Naive thymus-derived CD4-positive, alpha-beta T cell (primary cell): ENCODE measurements at regions of chr17 and their contacts with region 1.

Region 1: GRCh38 chr17:8997994-8998628 is 23.2 kb upstream of the NTN1 start:
- DNase-seq: peak; percentile 65 to 86 (median 76)
- ATAC-seq: peak; percentile 88
- H3K4me3 ChIP-seq: no peak overlapping the region
- H3K4me3 Mint-ChIP-seq: no peak overlapping the region
- H3K27ac ChIP-seq: no peak overlapping the region
- H3K27ac Mint-ChIP-seq: peak overlapping the region in 1 of 9 donors; percentile 52
- H3K4me1 ChIP-seq: peaks cover 0 to 6% of the 10 kb centered on the region in 2 donors
- H3K4me1 Mint-ChIP-seq: peaks cover 0 to 15% (median 8%) of the 10 kb centered on the region in 7 donors
- H3K27me3 ChIP-seq: peaks cover 0 to 5% of the 10 kb centered on the region in 2 donors
- H3K27me3 Mint-ChIP-seq: peaks cover 23 to 43% (median 30%) of the 10 kb centered on the region in 5 donors

Region 2: DNA sequence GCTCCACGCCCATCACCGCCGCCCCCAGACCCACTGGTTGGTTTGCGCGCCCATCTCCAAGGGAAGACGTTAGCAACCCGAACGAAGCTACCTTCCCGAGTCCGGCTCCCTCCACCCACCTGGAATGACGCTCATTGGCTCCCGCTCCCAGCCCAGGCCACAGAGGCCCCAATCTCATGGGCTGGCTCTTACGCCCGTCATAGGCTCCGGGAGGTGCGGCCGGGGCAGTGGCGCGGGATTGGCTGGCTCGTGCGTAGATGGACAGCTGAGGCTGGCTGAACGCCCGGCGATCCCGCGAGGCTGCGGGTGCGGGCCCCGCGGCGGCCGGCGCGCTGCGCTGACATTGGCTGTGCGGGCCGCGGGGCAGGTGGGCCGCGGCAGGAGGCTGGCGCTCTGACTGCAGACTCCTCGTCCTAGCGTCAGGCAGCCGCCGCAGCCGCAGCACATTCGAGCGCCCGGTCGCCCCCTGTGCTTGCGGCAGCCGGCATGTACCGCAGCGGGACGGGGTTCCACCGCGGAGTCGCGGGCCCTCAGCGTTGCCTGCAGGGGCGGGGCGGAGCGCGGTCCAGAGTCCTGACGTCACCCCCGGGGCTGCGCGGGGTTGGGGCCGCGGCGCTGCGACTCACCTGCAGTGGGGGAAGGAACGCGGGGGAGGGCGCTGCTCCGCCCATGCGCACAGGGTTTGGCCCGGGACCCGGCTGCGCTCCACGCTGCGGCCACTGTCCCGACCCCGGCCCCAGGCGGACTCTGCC is 367.1 kb before region 1 on chr17:
- CTCF ChIA-PET with region 1: no interaction called
- POLR2A ChIA-PET with region 1: no interaction called
- intact Hi-C with region 1: loop called in 1 of 2 experiments (anchors 10 kb)
- DNase-seq: peak; percentile 63 to 91 (median 82)
- ATAC-seq: peak; percentile 97
- H3K4me3 ChIP-seq: peak overlapping the region; percentile 64
- H3K4me3 Mint-ChIP-seq: peak overlapping the region; percentile 91 to 100 (median 99)
- H3K27ac ChIP-seq: peak overlapping the region; percentile 66
- H3K27ac Mint-ChIP-seq: peak overlapping the region in 7 of 9 donors; percentile 35 to 95 (median 80)
- H3K4me1 ChIP-seq: peaks cover 5% of the 10 kb centered on the region in 2 donors
- H3K4me1 Mint-ChIP-seq: peaks cover 0 to 18% (median 13%) of the 10 kb centered on the region in 7 donors
- H3K27me3 ChIP-seq: peaks cover 3 to 4% of the 10 kb centered on the region in 2 donors
- H3K27me3 Mint-ChIP-seq: peaks cover 30 to 67% (median 51%) of the 10 kb centered on the region in 5 donors

Region 3: GRCh38 chr17:8785547-8786413 is 212.3 kb before region 1 on chr17:
- CTCF ChIA-PET with region 1: interaction called, 19 read pairs
- POLR2A ChIA-PET with region 1: no interaction called
- intact Hi-C with region 1: loop called in 1 of 2 experiments (anchors 1 kb)
- DNase-seq: peak; percentile 18 to 60 (median 45)
- ATAC-seq: peak; percentile 62
- H3K4me3 ChIP-seq: no peak overlapping the region
- H3K4me3 Mint-ChIP-seq: no peak overlapping the region
- H3K27ac ChIP-seq: no peak overlapping the region
- H3K27ac Mint-ChIP-seq: no peak overlapping the region
- H3K4me1 ChIP-seq: no peaks in the 10 kb centered on the region
- H3K4me1 Mint-ChIP-seq: peaks cover 0 to 4% (median 0%) of the 10 kb centered on the region in 7 donors
- H3K27me3 ChIP-seq: no peaks in the 10 kb centered on the region
- H3K27me3 Mint-ChIP-seq: peaks cover 0 to 18% (median 0%) of the 10 kb centered on the region in 5 donors

Region 4: GRCh38 chr17:8900626-8901585 is 97.2 kb before region 1 on chr17:
- CTCF ChIA-PET with region 1: interaction called, 11 read pairs
- POLR2A ChIA-PET with region 1: interaction called, 3 read pairs
- intact Hi-C with region 1: loop called in 1 of 2 experiments (anchors 1 kb)
- DNase-seq: peak in 8 of 9 donors; percentile 5 to 49 (median 33)
- ATAC-seq: no peak
- H3K4me3 ChIP-seq: no peak overlapping the region
- H3K4me3 Mint-ChIP-seq: peak overlapping the region; percentile 12 to 83 (median 64)
- H3K27ac ChIP-seq: peak overlapping the region; percentile 80
- H3K27ac Mint-ChIP-seq: peak overlapping the region in 8 of 9 donors; percentile 78 to 99 (median 96)
- H3K4me1 ChIP-seq: peaks cover 45 to 58% of the 10 kb centered on the region in 2 donors
- H3K4me1 Mint-ChIP-seq: peaks cover 52 to 78% (median 66%) of the 10 kb centered on the region in 7 donors
- H3K27me3 ChIP-seq: no peaks in the 10 kb centered on the region
- H3K27me3 Mint-ChIP-seq: no peaks in the 10 kb centered on the region

Region 5: GRCh38 chr17:9037736-9038135 is 39.6 kb after region 1 on chr17:
- CTCF ChIA-PET with region 1: no interaction called
- POLR2A ChIA-PET with region 1: no interaction called
- intact Hi-C with region 1: no loop called
- DNase-seq: no peak
- ATAC-seq: no peak
- H3K4me3 ChIP-seq: no peak overlapping the region
- H3K4me3 Mint-ChIP-seq: no peak overlapping the region
- H3K27ac ChIP-seq: no peak overlapping the region
- H3K27ac Mint-ChIP-seq: no peak overlapping the region
- H3K4me1 ChIP-seq: no peaks in the 10 kb centered on the region
- H3K4me1 Mint-ChIP-seq: no peaks in the 10 kb centered on the region
- H3K27me3 ChIP-seq: no peaks in the 10 kb centered on the region
- H3K27me3 Mint-ChIP-seq: peaks cover 0 to 42% (median 23%) of the 10 kb centered on the region in 5 donors

Region 6: DNA sequence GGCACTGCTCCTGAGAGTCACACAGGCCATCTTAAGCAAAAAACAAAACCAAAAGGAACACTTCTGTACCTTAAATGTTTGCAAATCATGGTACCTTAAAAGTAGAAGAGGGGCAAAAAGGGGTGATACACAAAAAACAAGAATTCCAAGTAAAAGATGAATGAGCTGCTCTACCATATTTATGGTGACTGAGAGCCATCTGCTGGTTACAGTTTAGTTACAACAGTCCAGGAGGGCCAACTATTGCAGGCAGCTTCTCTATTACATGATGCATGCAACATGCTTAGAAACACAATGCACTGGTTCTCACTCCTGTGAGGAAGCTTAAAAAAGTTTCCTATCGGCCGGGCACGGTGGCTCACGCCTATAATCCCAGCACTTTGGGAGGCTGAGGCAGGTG is 524.0 kb after region 1 on chr17:
- CTCF ChIA-PET with region 1: no interaction called
- POLR2A ChIA-PET with region 1: no interaction called
- intact Hi-C with region 1: loop called (anchors 5 kb)
- DNase-seq: peak in 3 of 9 donors; percentile 11 to 16 (median 11)
- ATAC-seq: peak; percentile 34
- H3K4me3 ChIP-seq: no peak overlapping the region
- H3K4me3 Mint-ChIP-seq: no peak overlapping the region
- H3K27ac ChIP-seq: no peak overlapping the region
- H3K27ac Mint-ChIP-seq: no peak overlapping the region
- H3K4me1 ChIP-seq: peaks cover 0 to 8% of the 10 kb centered on the region in 2 donors
- H3K4me1 Mint-ChIP-seq: peaks cover 13 to 30% (median 23%) of the 10 kb centered on the region in 7 donors
- H3K27me3 ChIP-seq: no peaks in the 10 kb centered on the region
- H3K27me3 Mint-ChIP-seq: no peaks in the 10 kb centered on the region